ENCODE measurements at regions of chr11 and their contacts with region 1.

Region 1: DNA sequence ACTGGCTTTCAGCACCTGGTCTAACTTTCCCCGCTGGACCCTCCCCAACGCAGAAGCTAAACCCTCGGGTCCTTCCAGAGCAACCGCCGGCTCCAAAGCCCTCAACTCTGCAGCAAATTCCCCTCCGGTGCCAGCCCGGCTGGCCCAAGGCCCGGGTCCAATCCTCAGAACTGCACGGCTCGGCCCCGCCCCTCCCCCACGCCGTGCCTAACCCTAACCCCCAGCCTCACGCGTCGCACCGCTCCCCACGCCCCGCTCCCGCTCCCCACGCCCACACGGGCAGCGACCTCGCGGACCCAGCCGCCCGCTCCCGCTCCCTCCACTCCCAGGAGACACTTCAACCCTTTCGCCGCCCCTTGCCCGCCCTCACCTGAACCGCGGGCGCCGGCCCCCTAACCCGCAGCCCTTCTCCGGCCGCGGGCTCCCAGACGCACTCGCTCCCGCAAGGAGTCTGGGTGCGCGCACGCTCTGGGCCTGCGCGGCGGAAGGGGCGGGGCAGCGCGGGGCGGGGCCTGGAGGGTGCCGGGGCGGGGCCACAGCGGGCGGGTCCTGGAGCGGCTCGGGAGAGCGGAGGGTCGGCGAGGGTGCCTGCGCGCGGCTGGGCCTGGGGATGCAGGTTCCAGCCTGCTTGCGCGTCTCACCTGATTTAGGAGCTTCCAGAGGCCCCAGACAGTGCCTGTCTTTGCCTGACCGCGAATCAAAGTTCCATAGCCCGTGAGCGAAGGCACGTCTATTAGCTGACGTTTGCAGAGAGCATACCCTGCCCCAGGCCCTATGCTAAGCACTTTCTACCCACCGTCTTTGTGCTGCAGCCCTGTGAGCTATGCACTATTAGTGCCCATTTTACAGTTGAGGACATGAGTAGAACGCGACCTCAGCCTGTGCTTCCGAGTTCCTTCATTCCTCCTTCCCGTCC is at the start of gene NFRKB:
- DNase-seq: peak; percentile 81 to 92 (median 88)
- ATAC-seq: peak; percentile 96
- H3K4me3 ChIP-seq: peak within 1 kb of the TSS; percentile 91
- H3K4me3 Mint-ChIP-seq: peak within 1 kb of the TSS; percentile 92
- H3K27ac ChIP-seq: peak within 1 kb of the TSS; percentile 43 to 74
- H3K27ac Mint-ChIP-seq: peak within 1 kb of the TSS; percentile 92
- H3K4me1 ChIP-seq: peaks cover 20% of the 10 kb centered on the region
- H3K4me1 Mint-ChIP-seq: peaks cover 54% of the 10 kb centered on the region
- H3K27me3 ChIP-seq: no peaks in the 10 kb centered on the region
- H3K27me3 Mint-ChIP-seq: no peaks in the 10 kb centered on the region
- CTCF ChIP-seq: no peak
- total RNA-seq, gene NFRKB: 61.7 to 64.5 TPM

Region 2: GRCh38 chr11:129279326-129280026 is 615.9 kb before region 1 on chr11:
- CTCF ChIA-PET with region 1: no interaction called
- POLR2A ChIA-PET with region 1: no interaction called
- intact Hi-C with region 1: loop called in 1 of 2 experiments (anchors 5 kb)
- DNase-seq: peak; percentile 50 to 89 (median 72)
- ATAC-seq: peak; percentile 80
- H3K4me3 ChIP-seq: peak overlapping the region; percentile 65
- H3K4me3 Mint-ChIP-seq: peak overlapping the region; percentile 88
- H3K27ac ChIP-seq: no peak overlapping the region
- H3K27ac Mint-ChIP-seq: peak overlapping the region; percentile 66
- H3K4me1 ChIP-seq: peaks cover 16% of the 10 kb centered on the region
- H3K4me1 Mint-ChIP-seq: peaks cover 41% of the 10 kb centered on the region
- H3K27me3 ChIP-seq: peaks cover 11 to 12% of the 10 kb centered on the region in 2 experiments
- H3K27me3 Mint-ChIP-seq: peaks cover 18% of the 10 kb centered on the region
- CTCF ChIP-seq: no peak

Region 3: DNA sequence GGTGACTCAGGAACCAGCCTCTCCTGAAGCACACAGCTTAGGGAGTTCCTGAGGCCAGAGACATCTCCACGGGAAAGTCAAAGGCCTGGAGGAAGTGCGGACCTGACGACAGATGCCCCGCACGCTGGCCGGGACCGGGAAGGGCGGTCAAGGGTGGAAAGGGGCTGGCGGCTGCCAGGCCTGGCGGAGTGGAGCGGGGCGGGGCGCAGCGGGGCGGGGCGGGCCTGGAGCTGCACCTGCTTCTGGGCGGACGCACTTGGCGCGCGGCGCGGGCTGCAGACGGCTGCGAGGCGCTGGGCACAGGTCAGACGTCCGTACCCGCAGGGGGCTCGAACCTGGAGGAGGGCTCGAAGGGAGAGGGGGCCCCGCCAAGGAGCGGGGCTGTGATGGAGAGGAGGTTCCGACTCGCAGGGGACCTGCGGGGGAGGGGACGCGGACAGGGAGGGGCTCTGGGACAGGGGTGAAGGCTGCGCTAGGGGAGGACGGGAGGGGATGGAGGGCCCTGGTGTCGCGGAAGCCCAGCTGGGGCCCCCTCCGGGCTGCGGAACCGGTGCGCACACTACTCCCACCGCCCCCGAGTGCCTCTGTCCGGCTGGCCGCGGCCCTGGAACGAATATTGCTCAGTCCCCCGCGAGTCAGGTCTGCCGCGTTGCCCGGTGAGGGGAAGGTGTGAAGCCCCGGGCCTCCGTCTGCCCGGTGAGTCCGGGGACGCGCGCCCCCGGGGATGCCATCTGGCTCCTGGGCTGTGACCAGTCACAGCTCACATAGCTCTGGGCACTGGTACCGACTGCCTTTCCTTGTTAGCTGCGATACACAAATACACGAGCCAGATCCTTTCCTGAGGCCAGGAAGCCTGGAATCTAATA is 79.6 kb before region 1 on chr11 and contains the start of gene TMEM45B:
- CTCF ChIA-PET with region 1: no interaction called
- POLR2A ChIA-PET with region 1: interaction called, 9 read pairs
- intact Hi-C with region 1: loop called (anchors 5 to 10 kb)
- DNase-seq: peak in 13 of 14 experiments; percentile 14 to 62 (median 33)
- ATAC-seq: peak; percentile 35
- H3K4me3 ChIP-seq: peak within 1 kb of the TSS; percentile 54
- H3K4me3 Mint-ChIP-seq: peak within 1 kb of the TSS; percentile 89
- H3K27ac ChIP-seq: no peak within 1 kb of the TSS
- H3K27ac Mint-ChIP-seq: peak within 1 kb of the TSS; percentile 95
- H3K4me1 ChIP-seq: peaks cover 38% of the 10 kb centered on the region
- H3K4me1 Mint-ChIP-seq: peaks cover 58% of the 10 kb centered on the region
- H3K27me3 ChIP-seq: peaks cover 5 to 9% of the 10 kb centered on the region in 2 experiments
- H3K27me3 Mint-ChIP-seq: peaks cover 40% of the 10 kb centered on the region
- CTCF ChIP-seq: no peak
- total RNA-seq, gene TMEM45B: 1.7 to 1.9 TPM

Region 4: GRCh38 chr11:129881570-129882170 is 13.7 kb before region 1 on chr11:
- CTCF ChIA-PET with region 1: interaction called, 5 read pairs
- POLR2A ChIA-PET with region 1: interaction called, 6 read pairs
- intact Hi-C with region 1: loop called in 1 of 2 experiments (anchors 2 kb)
- DNase-seq: peak; percentile 21 to 65 (median 44)
- ATAC-seq: peak; percentile 87
- H3K4me3 ChIP-seq: no peak overlapping the region
- H3K4me3 Mint-ChIP-seq: no peak overlapping the region
- H3K27ac ChIP-seq: no peak overlapping the region
- H3K27ac Mint-ChIP-seq: no peak overlapping the region
- H3K4me1 ChIP-seq: no peaks in the 10 kb centered on the region
- H3K4me1 Mint-ChIP-seq: peaks cover 4% of the 10 kb centered on the region
- H3K27me3 ChIP-seq: no peaks in the 10 kb centered on the region
- H3K27me3 Mint-ChIP-seq: no peaks in the 10 kb centered on the region
- CTCF ChIP-seq: peak; percentile 55

Region 5: GRCh38 chr11:130069684-130070108 is 174.3 kb after region 1 on chr11 and contains the start of gene APLP2:
- CTCF ChIA-PET with region 1: interaction called, 3 read pairs
- POLR2A ChIA-PET with region 1: no interaction called
- intact Hi-C with region 1: loop called in 1 of 2 experiments (anchors 1 kb)
- DNase-seq: peak; percentile 92 to 99 (median 97)
- ATAC-seq: peak; percentile 92
- H3K4me3 ChIP-seq: peak within 1 kb of the TSS; percentile 64
- H3K4me3 Mint-ChIP-seq: peak within 1 kb of the TSS; percentile 99
- H3K27ac ChIP-seq: peak within 1 kb of the TSS; percentile 58 to 78
- H3K27ac Mint-ChIP-seq: peak within 1 kb of the TSS; percentile 92
- H3K4me1 ChIP-seq: peaks cover 20% of the 10 kb centered on the region
- H3K4me1 Mint-ChIP-seq: peaks cover 27% of the 10 kb centered on the region
- H3K27me3 ChIP-seq: no peaks in the 10 kb centered on the region
- H3K27me3 Mint-ChIP-seq: peaks cover 4% of the 10 kb centered on the region
- CTCF ChIP-seq: no peak
- total RNA-seq, gene APLP2: 28.8 to 29.5 TPM

Region 6: DNA sequence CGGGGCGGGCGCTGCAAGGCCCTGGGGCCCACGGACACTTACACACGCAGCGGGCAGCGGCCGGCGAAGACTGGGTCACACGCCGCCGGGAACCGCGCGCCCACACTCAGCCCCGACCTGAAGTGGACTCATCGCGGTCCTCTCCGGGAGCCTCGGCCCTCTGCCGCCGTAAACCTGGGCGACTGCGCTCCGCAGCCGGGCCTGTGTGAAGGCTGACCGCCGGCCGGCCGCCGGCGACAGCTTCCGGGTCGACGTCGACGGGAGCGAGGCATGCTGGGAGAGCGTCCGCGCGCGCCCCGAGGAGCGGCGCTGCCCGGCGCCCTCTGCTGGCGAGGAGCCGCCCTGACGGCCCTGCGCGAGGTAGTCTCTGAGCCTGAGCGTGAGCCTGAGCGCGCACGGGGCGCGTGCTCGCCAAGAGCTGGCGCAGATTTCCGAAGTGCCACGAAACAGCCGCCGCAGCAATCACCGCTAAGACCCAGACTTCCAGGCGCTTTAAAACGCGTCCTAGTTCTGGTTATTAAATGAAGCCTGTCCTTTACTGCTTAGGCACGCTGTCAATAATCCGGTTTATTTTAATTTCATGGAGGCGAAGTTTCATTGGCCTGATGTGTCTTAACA is 1021.0 kb after region 1 on chr11 and contains the start of gene SNX19:
- CTCF ChIA-PET with region 1: no interaction called
- POLR2A ChIA-PET with region 1: no interaction called
- intact Hi-C with region 1: loop called in 1 of 2 experiments (anchors 10 kb)
- DNase-seq: peak; percentile 79 to 96 (median 90)
- ATAC-seq: peak; percentile 99
- H3K4me3 ChIP-seq: peak within 1 kb of the TSS; percentile 87
- H3K4me3 Mint-ChIP-seq: peak within 1 kb of the TSS; percentile 91
- H3K27ac ChIP-seq: peak within 1 kb of the TSS; percentile 71 to 72
- H3K27ac Mint-ChIP-seq: peak within 1 kb of the TSS; percentile 87
- H3K4me1 ChIP-seq: peaks cover 28% of the 10 kb centered on the region
- H3K4me1 Mint-ChIP-seq: peaks cover 52% of the 10 kb centered on the region
- H3K27me3 ChIP-seq: no peaks in the 10 kb centered on the region
- H3K27me3 Mint-ChIP-seq: peaks cover 11% of the 10 kb centered on the region
- CTCF ChIP-seq: peak; percentile 85
- total RNA-seq, gene SNX19: 41.2 to 43.8 TPM